Activated B cell treated with CpG ODN at 0.5 μM for 24 hours (primary cell): ENCODE measurements at regions of chr1 and their contacts with region 1.

Region 1: DNA sequence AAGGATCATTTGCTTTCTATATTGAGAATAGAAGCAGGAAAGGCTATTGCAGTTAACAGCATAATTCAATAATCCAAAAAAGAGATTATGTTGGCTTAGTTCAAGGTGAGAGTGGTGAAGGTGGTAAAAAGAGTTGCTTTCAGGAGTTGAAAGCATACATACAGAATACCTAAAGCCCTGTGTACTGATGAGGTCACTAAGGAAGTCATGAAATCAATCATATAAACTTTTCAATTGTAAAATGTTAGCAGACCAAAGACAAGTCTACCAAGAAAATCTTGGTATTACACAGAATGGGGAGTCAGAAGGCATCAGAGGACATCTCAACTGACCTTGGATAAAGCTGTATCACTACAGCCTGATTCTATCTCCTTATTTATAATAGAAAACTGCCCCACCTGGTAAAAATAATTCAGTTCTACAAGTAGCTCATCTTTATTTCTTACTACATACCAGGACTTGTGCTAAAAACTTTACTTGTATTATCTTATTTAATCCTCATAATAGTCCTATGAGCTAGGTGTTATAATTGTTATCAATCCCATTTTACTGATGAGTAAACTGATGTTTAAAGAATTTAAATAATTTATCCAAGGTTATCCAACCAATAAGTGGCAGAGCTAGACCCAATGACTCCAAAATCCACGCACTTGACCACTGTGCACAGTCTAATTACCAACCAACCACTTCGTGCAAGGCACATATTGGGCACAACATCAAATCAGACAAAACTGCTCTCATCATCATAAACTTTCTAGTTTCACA is 40.9 kb downstream of the TUT4 start:
- DNase-seq: no peak
- ATAC-seq: no peak
- H3K4me3 Mint-ChIP-seq: no peak overlapping the region
- H3K27ac Mint-ChIP-seq: no peak overlapping the region
- H3K4me1 Mint-ChIP-seq: no peaks in the 10 kb centered on the region
- H3K27me3 Mint-ChIP-seq: no peaks in the 10 kb centered on the region
- CTCF ChIP-seq: no peak

Region 2: GRCh38 chr1:52544665-52545525 is 32.9 kb after region 1 on chr1:
- CTCF ChIA-PET with region 1: no interaction called
- POLR2A ChIA-PET with region 1: no interaction called
- intact Hi-C with region 1: loop called (anchors 5 kb)
- DNase-seq: no peak
- ATAC-seq: no peak
- H3K4me3 Mint-ChIP-seq: no peak overlapping the region
- H3K27ac Mint-ChIP-seq: peak overlapping the region; percentile 35
- H3K4me1 Mint-ChIP-seq: peaks cover 47% of the 10 kb centered on the region
- H3K27me3 Mint-ChIP-seq: no peaks in the 10 kb centered on the region
- CTCF ChIP-seq: no peak